ENCODE measurements at regions of chr12 and their contacts with region 1.

Region 1: GRCh38 chr12:54259194-54260011 is 20.5 kb downstream of the CBX5 start:
- DNase-seq: peak; percentile 92
- H3K4me3 ChIP-seq: peak overlapping the region; percentile 65
- H3K27ac ChIP-seq: peak overlapping the region; percentile 73
- H3K4me1 ChIP-seq: peaks cover 53% of the 10 kb centered on the region
- CTCF ChIP-seq: no peak

Region 2: GRCh38 chr12:54159140-54159539 is 100.3 kb before region 1 on chr12:
- CTCF ChIA-PET with region 1: no interaction called
- POLR2A ChIA-PET with region 1: no interaction called
- intact Hi-C with region 1: no loop called
- DNase-seq: peak; percentile 66
- H3K4me3 ChIP-seq: no peak overlapping the region
- H3K27ac ChIP-seq: no peak overlapping the region
- H3K4me1 ChIP-seq: peaks cover 26% of the 10 kb centered on the region
- CTCF ChIP-seq: peak; percentile 29; the same call in 1 of the 2 replicates

Region 3: DNA sequence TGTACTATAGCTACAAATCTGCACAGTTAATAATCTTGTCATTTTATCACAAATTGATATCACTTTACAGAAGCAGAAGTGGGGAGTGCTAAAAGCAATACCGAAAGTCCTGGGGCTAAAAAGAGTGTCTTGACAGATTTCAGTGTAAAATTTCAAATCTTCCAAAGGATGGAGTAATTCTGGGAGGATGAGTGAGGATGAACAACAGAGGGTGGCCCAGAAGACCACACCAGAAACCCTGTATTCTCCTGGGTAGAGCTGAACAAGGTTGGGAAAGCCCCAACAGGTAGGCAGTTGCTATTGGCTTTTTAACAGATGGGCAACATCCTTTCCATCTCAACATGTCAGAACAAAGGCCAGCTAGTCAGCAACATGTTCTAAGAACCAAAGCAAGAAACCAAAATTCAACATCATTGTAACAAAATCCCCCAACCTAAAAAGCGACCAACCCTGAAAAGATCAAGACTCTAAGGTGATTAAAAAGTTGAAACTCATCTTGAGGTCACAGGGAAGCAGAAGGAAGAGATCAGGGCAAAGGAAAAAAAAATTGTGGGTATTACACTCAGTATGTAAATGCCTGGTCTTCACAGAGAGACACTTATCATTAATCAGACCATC is 18.3 kb before region 1 on chr12:
- CTCF ChIA-PET with region 1: no interaction called
- POLR2A ChIA-PET with region 1: interaction called, 13 read pairs
- intact Hi-C with region 1: no loop called
- DNase-seq: no peak
- H3K4me3 ChIP-seq: no peak overlapping the region
- H3K27ac ChIP-seq: no peak overlapping the region
- H3K4me1 ChIP-seq: peaks cover 10% of the 10 kb centered on the region
- CTCF ChIP-seq: no peak

Region 4: GRCh38 chr12:54311051-54311450 is 51.6 kb after region 1 on chr12:
- CTCF ChIA-PET with region 1: no interaction called
- POLR2A ChIA-PET with region 1: no interaction called
- intact Hi-C with region 1: no loop called
- DNase-seq: no peak
- H3K4me3 ChIP-seq: no peak overlapping the region
- H3K27ac ChIP-seq: no peak overlapping the region
- H3K4me1 ChIP-seq: no peaks in the 10 kb centered on the region
- CTCF ChIP-seq: no peak

Measured in OCI-LY7 (cell line).